PC-3 (cell line): ENCODE measurements at regions of chr19 and their contacts with region 1.

Region 1: DNA sequence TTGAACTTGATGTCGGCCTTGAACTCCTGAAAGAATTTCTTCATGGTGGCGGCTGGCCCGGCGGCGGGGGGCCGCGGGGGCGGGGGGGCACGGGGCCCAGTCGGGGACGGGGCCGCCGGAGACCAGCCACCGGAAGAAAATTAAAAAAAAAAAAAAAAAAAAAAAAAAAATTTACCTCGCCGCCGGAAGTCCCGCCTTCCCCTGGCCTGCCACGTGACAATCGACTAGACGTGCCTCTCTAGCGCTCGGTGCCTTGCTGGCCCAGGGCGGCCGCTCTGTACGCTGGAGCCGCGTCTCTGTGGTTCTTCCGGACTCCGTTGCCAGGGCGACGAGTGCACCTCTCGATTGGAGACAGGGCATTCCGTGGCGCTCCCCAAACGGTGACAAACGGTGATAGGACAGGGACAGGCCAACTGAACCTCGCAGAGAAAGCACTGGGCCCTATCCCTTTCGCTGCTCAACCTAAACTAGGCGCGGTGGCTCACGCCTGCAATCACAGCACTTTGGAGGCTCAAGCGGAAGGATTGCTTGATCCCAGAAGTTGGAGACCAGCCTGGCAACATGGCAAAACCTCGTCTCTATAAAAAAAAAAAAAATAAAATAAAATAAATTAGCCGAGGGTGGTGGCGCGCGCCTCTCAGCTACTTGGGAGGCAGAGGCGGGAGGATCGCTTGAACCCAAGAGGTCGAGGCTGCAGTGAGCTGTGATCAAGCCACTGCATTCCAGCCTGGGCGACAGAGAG is at the start of gene UBXN6:
- DNase-seq: peak; percentile 94
- ATAC-seq: peak; percentile 83
- H3K4me3 ChIP-seq: peak within 1 kb of the TSS; percentile 81
- H3K27ac ChIP-seq: peak within 1 kb of the TSS; percentile 5; the same call in 1 of the 2 replicates
- H3K4me1 ChIP-seq: no peaks in the 10 kb centered on the region; the same call in 1 of the 2 replicates
- H3K27me3 ChIP-seq: no peaks in the 10 kb centered on the region
- CTCF ChIP-seq: no peak
- total RNA-seq, gene UBXN6: 64.0 and 86.1 TPM in 2 replicates

Region 2: GRCh38 chr19:4246767-4247593 is 210.8 kb before region 1 on chr19 and contains the start of gene YJU2:
- CTCF ChIA-PET with region 1: no interaction called
- POLR2A ChIA-PET with region 1: no interaction called
- intact Hi-C with region 1: loop called (anchors 2 kb)
- DNase-seq: peak; percentile 98
- ATAC-seq: peak; percentile 97
- H3K4me3 ChIP-seq: peak within 1 kb of the TSS; percentile 78
- H3K27ac ChIP-seq: peak within 1 kb of the TSS; percentile 84
- H3K4me1 ChIP-seq: no peaks in the 10 kb centered on the region
- H3K27me3 ChIP-seq: no peaks in the 10 kb centered on the region
- CTCF ChIP-seq: peak; percentile 68
- total RNA-seq, gene YJU2: 33.1 and 45.6 TPM in 2 replicates

Region 3: GRCh38 chr19:4495471-4495870 is 37.6 kb after region 1 on chr19:
- CTCF ChIA-PET with region 1: no interaction called
- POLR2A ChIA-PET with region 1: no interaction called
- intact Hi-C with region 1: no loop called
- DNase-seq: no peak
- ATAC-seq: peak; percentile 87
- H3K4me3 ChIP-seq: no peak overlapping the region
- H3K27ac ChIP-seq: no peak overlapping the region
- H3K4me1 ChIP-seq: no peaks in the 10 kb centered on the region
- H3K27me3 ChIP-seq: no peaks in the 10 kb centered on the region
- CTCF ChIP-seq: peak; percentile 46